Activated CD8-positive, alpha-beta T cell treated with anti-CD3 and anti-CD28 coated beads for 36 hours (primary cell): ENCODE measurements at regions of chr1 and their contacts with region 1.

Region 1: GRCh38 chr1:19251305-19252196 is at the starts of genes EMC1 and MRTO4:
- DNase-seq: peak; percentile 93
- ATAC-seq: peak; percentile 93
- H3K4me3 Mint-ChIP-seq: peak within 1 kb of the TSS; percentile 95
- H3K27ac Mint-ChIP-seq: peak within 1 kb of the TSS; percentile 94
- H3K4me1 Mint-ChIP-seq: peaks cover 33% of the 10 kb centered on the region
- H3K27me3 Mint-ChIP-seq: no peaks in the 10 kb centered on the region
- CTCF ChIP-seq: no peak
- total RNA-seq, gene EMC1: 38.3 to 39.5 TPM
- total RNA-seq, gene MRTO4: 90.9 to 93.4 TPM

Region 2: DNA sequence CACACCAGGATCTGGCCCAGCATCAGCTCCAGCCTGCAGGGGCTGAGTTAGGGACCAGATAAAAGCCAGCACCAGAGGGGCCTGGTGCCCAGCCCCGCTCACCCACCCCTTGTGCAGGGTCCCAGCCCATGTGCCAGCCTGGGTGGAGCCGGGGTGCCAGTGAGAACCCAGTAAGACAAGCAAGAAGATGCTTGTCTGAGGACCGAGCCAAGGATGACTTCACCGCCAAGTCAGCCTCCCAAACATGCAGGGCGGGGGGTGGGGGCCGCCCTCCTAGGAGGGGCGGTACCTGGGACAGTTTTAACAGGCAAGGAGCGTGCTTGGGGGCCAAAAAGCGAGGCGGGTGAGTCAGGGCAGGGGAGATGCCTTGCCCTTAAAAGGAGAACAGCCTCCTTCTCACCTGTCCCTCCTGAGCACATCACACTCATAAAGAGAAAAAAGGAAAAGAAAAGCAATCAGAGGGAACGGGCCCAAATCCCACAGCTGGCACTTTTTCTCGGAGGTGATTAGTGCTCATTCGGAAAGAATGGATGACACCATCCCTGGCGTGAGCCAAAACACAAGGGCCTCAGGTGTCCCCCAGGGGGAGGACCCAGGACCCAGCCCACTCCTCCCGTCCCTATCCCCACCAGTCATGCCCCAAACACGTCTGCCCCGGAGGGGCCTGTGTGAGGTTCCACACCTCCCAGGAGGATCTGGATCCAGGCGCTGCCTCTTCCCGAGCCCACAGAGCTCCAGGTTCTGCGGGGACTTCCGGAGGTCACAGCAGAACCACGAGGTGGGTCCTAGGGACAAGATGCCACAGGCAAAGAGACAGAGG is 217.5 kb before region 1 on chr1:
- CTCF ChIA-PET with region 1: no interaction called
- POLR2A ChIA-PET with region 1: no interaction called
- intact Hi-C with region 1: no loop called
- DNase-seq: no peak
- ATAC-seq: no peak
- H3K4me3 Mint-ChIP-seq: no peak overlapping the region
- H3K27ac Mint-ChIP-seq: no peak overlapping the region
- H3K4me1 Mint-ChIP-seq: no peaks in the 10 kb centered on the region
- H3K27me3 Mint-ChIP-seq: no peaks in the 10 kb centered on the region
- CTCF ChIP-seq: no peak

Region 3: DNA sequence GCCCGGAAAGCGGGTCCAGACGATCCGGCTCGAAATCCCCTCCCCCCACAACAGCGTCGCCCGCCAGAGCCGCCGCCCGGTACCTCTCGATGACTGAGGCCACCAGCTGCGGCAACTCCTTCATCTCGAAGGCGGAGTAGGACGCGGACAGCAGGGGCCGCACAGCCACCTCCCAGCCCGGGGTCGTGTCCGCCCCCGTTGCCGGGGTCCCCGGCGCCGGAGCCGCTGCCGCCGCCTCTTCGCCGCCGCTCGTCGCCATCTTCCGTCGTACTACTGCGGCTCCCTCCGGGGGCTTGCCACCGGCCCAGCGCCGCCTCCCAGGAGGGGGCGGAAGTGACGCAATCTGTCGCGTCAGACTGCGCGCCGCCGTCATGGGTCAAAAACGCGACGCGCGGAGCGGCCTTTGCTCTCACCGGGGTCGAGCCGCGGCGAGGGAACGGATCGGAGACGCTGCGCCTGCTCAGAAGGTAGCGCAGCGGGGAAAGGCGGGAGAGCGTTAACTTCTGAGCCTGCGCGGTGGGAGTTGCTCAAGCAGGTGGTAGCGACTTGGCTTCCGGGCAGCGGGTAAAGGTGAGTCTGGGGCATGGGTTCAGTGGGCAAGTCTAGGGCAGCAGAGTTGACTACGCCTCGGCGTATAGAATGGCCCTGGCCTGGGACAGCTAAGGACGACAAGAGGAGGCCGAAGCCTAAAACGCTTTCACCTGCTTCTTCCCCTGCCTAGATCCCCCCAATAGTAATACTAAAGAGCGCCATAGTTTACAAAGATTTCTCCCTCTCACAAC is 41.4 kb before region 1 on chr1 and contains the start of gene UBR4:
- CTCF ChIA-PET with region 1: no interaction called
- POLR2A ChIA-PET with region 1: interaction called, 54 read pairs
- intact Hi-C with region 1: no loop called
- DNase-seq: peak; percentile 97
- ATAC-seq: peak; percentile 88
- H3K4me3 Mint-ChIP-seq: peak within 1 kb of the TSS; percentile 93
- H3K27ac Mint-ChIP-seq: peak within 1 kb of the TSS; percentile 98
- H3K4me1 Mint-ChIP-seq: peaks cover 61% of the 10 kb centered on the region
- H3K27me3 Mint-ChIP-seq: no peaks in the 10 kb centered on the region
- CTCF ChIP-seq: no peak
- total RNA-seq, gene UBR4: 133 TPM

Region 4: GRCh38 chr1:19240673-19241538 is 10.6 kb before region 1 on chr1:
- CTCF ChIA-PET with region 1: interaction called, 10 read pairs
- POLR2A ChIA-PET with region 1: interaction called, 24 read pairs
- intact Hi-C with region 1: no loop called
- DNase-seq: peak; percentile 72
- ATAC-seq: peak; percentile 100
- H3K4me3 Mint-ChIP-seq: no peak overlapping the region
- H3K27ac Mint-ChIP-seq: peak overlapping the region; percentile 30
- H3K4me1 Mint-ChIP-seq: no peaks in the 10 kb centered on the region
- H3K27me3 Mint-ChIP-seq: no peaks in the 10 kb centered on the region
- CTCF ChIP-seq: peak; percentile 99

Region 5: GRCh38 chr1:19273106-19273843 is 21.7 kb after region 1 on chr1:
- CTCF ChIA-PET with region 1: no interaction called
- POLR2A ChIA-PET with region 1: no interaction called
- intact Hi-C with region 1: no loop called
- DNase-seq: no peak
- ATAC-seq: no peak
- H3K4me3 Mint-ChIP-seq: no peak overlapping the region
- H3K27ac Mint-ChIP-seq: no peak overlapping the region
- H3K4me1 Mint-ChIP-seq: peaks cover 2% of the 10 kb centered on the region
- H3K27me3 Mint-ChIP-seq: peaks cover 13% of the 10 kb centered on the region
- CTCF ChIP-seq: no peak

Region 6: GRCh38 chr1:19287436-19288185 is 36.1 kb after region 1 on chr1:
- CTCF ChIA-PET with region 1: no interaction called
- POLR2A ChIA-PET with region 1: interaction called, 10 read pairs
- intact Hi-C with region 1: no loop called
- DNase-seq: no peak
- ATAC-seq: no peak
- H3K4me3 Mint-ChIP-seq: peak overlapping the region; percentile 9
- H3K27ac Mint-ChIP-seq: no peak overlapping the region
- H3K4me1 Mint-ChIP-seq: peaks cover 3% of the 10 kb centered on the region
- H3K27me3 Mint-ChIP-seq: peaks cover 14% of the 10 kb centered on the region
- CTCF ChIP-seq: no peak

Region 7: GRCh38 chr1:19311959-19312781 is 60.6 kb after region 1 on chr1 and contains the starts of genes AKR7A2 and SLC66A1:
- CTCF ChIA-PET with region 1: no interaction called
- POLR2A ChIA-PET with region 1: interaction called, 12 read pairs
- intact Hi-C with region 1: no loop called
- DNase-seq: peak; percentile 91
- ATAC-seq: peak; percentile 99
- H3K4me3 Mint-ChIP-seq: peak within 1 kb of the TSS; percentile 90
- H3K27ac Mint-ChIP-seq: peak within 1 kb of the TSS; percentile 78
- H3K4me1 Mint-ChIP-seq: peaks cover 25% of the 10 kb centered on the region
- H3K27me3 Mint-ChIP-seq: no peaks in the 10 kb centered on the region
- CTCF ChIP-seq: no peak
- total RNA-seq, gene AKR7A2: 42.9 to 43.4 TPM
- total RNA-seq, gene SLC66A1: 3.6 TPM

Region 8: GRCh38 chr1:19365721-19366120 is 114.2 kb after region 1 on chr1:
- CTCF ChIA-PET with region 1: no interaction called
- POLR2A ChIA-PET with region 1: no interaction called
- intact Hi-C with region 1: no loop called
- DNase-seq: no peak
- ATAC-seq: no peak
- H3K4me3 Mint-ChIP-seq: no peak overlapping the region
- H3K27ac Mint-ChIP-seq: peak overlapping the region; percentile 22
- H3K4me1 Mint-ChIP-seq: peaks cover 49% of the 10 kb centered on the region
- H3K27me3 Mint-ChIP-seq: no peaks in the 10 kb centered on the region
- CTCF ChIP-seq: no peak